IMR-90 (cell line): ENCODE measurements at regions of chr11 and their contacts with region 1.

Region 1: GRCh38 chr11:124673333-124674167 is at the starts of genes SIAE and SPA17:
- DNase-seq: peak; percentile 95
- ATAC-seq: peak; percentile 97
- H3K4me3 ChIP-seq: peak within 1 kb of the TSS; percentile 90
- H3K27ac ChIP-seq: peak within 1 kb of the TSS; percentile 77
- H3K4me1 ChIP-seq: peaks cover 9% of the 10 kb centered on the region
- H3K27me3 ChIP-seq: no peaks in the 10 kb centered on the region
- CTCF ChIP-seq: no peak
- POLR2A ChIP-seq: peak; percentile 80
- RAD21 ChIP-seq: no peak
- total RNA-seq, gene SIAE: 3.3 and 4.7 TPM in 2 replicates
- total RNA-seq, gene SPA17: 9.9 and 14.4 TPM in 2 replicates

Region 2: GRCh38 chr11:124717786-124718651 is 44.5 kb after region 1 on chr11:
- CTCF ChIA-PET with region 1: no interaction called
- POLR2A ChIA-PET with region 1: no interaction called
- dilution Hi-C with region 1: no loop called
- in situ Hi-C with region 1: no loop called
- intact Hi-C with region 1: loop called (anchors 5 kb)
- DNase-seq: peak; percentile 34
- ATAC-seq: peak; percentile 87
- H3K4me3 ChIP-seq: peak overlapping the region; percentile 31
- H3K27ac ChIP-seq: no peak overlapping the region
- H3K4me1 ChIP-seq: peaks cover 3% of the 10 kb centered on the region
- H3K27me3 ChIP-seq: peaks cover 33% of the 10 kb centered on the region
- CTCF ChIP-seq: no peak
- POLR2A ChIP-seq: no peak
- RAD21 ChIP-seq: no peak

Region 3: DNA sequence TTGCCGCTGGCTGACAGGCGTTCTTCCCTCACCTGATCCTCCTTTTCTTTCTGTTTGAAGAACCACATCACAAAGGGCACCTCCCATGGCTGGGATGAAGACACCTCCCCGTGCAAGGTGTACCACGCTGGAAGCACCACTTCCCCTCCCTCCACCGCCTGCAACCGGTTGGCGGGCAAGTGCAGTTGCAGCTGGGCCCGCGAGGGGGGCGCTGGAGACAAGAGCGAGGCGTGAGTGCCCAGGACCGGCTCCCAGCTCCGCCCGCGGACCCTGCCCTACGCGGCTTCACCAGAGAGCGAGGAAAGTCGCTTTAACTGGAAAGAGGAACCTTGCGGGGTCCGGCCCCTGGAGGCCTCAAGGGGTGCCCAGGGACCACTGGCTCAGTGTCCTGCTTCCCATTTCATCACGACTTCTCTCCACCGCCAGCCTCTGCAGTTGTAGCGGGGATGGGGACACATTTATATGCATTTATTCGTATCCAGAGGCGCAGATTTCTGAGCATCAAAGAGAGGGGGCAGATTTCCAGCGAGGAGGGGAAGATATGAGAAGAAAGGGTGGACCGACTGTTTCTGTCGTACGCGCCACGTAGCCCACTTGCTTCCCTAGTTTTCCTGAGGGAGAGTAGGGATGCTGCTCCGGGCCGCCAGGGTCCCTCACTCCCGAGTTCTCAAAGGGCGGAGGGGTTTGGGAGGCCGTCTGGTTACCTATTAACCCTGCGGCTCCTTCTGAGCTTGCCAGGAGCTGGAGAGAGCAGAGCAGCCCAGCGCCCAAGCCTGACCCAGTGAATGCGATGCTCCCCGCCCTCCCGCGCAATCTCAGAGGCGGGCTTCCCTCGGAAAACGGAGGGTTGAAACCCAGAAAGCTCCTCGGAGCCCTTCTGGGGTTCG is 85.0 kb after region 1 on chr11:
- CTCF ChIA-PET with region 1: interaction called, 5 read pairs
- POLR2A ChIA-PET with region 1: no interaction called
- dilution Hi-C with region 1: no loop called
- in situ Hi-C with region 1: loop called (anchors 5 kb)
- intact Hi-C with region 1: loop called (anchors 1 kb)
- DNase-seq: peak; percentile 44
- ATAC-seq: peak; percentile 81
- H3K4me3 ChIP-seq: peak overlapping the region; percentile 33
- H3K27ac ChIP-seq: no peak overlapping the region
- H3K4me1 ChIP-seq: peaks cover 5% of the 10 kb centered on the region
- H3K27me3 ChIP-seq: peaks cover 17% of the 10 kb centered on the region; the same call in 1 of the 2 replicates
- CTCF ChIP-seq: peak; percentile 52
- POLR2A ChIP-seq: no peak
- RAD21 ChIP-seq: peak; percentile 39

Region 4: DNA sequence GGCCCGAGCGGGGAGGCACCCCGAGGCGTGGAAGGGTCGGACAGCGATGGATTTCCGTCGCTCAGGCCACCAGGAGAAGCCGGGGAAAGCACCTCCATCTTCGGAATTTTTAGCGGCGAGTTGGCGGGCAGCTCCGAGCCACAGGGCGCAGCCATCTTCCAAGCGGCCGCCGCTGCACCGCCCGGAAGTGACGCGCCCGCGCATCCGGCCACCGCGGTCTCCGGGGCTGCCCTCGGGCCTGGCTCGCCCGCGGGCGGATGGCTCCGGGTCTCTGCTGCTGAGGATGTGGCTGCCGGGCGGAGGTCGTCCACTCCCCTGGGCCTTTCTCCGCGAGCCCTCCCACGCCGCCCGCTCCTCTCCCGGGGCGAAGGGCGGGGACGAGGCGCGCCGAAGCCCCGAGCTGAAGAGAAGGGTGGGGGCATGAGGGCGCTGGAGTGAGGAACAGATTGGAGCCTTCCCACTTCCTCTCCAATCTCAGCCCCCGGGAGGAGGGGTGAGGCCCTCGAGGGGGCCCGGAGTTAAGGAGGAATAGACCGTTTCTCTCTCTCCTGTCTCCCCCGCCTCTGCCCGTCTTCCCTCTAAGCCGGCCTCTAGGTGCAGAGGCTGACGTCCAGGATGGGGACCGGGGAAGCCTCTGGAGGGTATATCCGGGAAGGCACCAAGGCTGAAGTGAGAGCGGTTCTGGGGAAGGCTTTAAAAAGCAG is 126.8 kb after region 1 on chr11 and contains the start of gene MSANTD2:
- CTCF ChIA-PET with region 1: no interaction called
- POLR2A ChIA-PET with region 1: interaction called, 3 read pairs
- dilution Hi-C with region 1: no loop called
- in situ Hi-C with region 1: no loop called
- intact Hi-C with region 1: loop called (anchors 1 kb)
- DNase-seq: peak; percentile 79
- ATAC-seq: peak; percentile 92
- H3K4me3 ChIP-seq: peak within 1 kb of the TSS; percentile 68
- H3K27ac ChIP-seq: peak within 1 kb of the TSS; percentile 99
- H3K4me1 ChIP-seq: peaks cover 2% of the 10 kb centered on the region
- H3K27me3 ChIP-seq: no peaks in the 10 kb centered on the region
- CTCF ChIP-seq: no peak
- POLR2A ChIP-seq: peak; percentile 93
- RAD21 ChIP-seq: no peak
- total RNA-seq, gene MSANTD2: 5.0 and 6.4 TPM in 2 replicates

Region 5: GRCh38 chr11:124865921-124866583 is 192.5 kb after region 1 on chr11:
- CTCF ChIA-PET with region 1: no interaction called
- POLR2A ChIA-PET with region 1: no interaction called
- dilution Hi-C with region 1: no loop called
- in situ Hi-C with region 1: no loop called
- intact Hi-C with region 1: loop called (anchors 2 kb)
- DNase-seq: peak; percentile 15
- ATAC-seq: peak; percentile 56
- H3K4me3 ChIP-seq: peak overlapping the region; percentile 20; the same call in 1 of the 2 replicates
- H3K27ac ChIP-seq: no peak overlapping the region
- H3K4me1 ChIP-seq: peaks cover 2% of the 10 kb centered on the region
- H3K27me3 ChIP-seq: peaks cover 97% of the 10 kb centered on the region
- CTCF ChIP-seq: peak; percentile 69
- POLR2A ChIP-seq: no peak
- RAD21 ChIP-seq: peak; percentile 42; the same call in 1 of the 2 replicates

Region 6: DNA sequence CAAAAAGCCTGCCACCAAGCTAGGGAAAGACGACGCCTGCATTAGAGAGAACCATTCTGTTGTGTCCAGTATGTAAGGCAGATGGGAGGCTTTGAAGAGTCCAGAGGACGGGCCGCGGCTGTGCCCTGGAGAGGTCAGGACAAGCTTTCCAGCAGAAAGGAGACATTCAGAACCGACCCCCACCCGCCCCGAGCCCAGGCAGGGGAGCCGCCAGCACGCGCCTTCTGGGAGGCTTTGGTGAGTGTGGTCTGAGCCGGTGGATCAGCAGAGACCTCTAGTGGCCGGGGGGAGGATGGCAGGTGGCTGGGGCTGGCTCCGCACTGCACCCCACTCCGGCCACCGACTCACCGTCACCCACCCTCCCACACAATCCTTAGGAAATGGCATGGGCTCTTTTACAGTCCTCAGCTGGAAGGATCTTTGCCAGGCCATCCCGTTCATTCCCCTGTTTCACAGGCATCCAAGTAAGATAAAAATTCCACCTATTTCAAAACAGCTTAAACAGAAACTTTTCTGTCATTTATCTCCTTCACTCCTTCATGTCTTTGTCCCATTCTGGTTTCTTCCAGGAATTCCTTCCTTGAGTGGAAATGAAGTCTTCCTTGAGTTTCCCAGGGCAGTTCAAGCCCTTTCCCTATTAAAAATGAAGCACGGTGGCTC is 731.4 kb after region 1 on chr11:
- CTCF ChIA-PET with region 1: no interaction called
- POLR2A ChIA-PET with region 1: no interaction called
- dilution Hi-C with region 1: no loop called
- in situ Hi-C with region 1: loop called (anchors 25 kb)
- intact Hi-C with region 1: no loop called
- DNase-seq: peak; percentile 47
- ATAC-seq: peak; percentile 96
- H3K4me3 ChIP-seq: no peak overlapping the region
- H3K27ac ChIP-seq: no peak overlapping the region
- H3K4me1 ChIP-seq: peaks cover 6% of the 10 kb centered on the region; the same call in 1 of the 2 replicates
- H3K27me3 ChIP-seq: peaks cover 16% of the 10 kb centered on the region
- CTCF ChIP-seq: peak; percentile 95
- POLR2A ChIP-seq: peak; percentile 43; the same call in 1 of the 2 replicates
- RAD21 ChIP-seq: peak; percentile 92